Psoas muscle (tissue), 8 donors: ENCODE measurements at regions of chr7 and their contacts with region 1.

Region 1: DNA sequence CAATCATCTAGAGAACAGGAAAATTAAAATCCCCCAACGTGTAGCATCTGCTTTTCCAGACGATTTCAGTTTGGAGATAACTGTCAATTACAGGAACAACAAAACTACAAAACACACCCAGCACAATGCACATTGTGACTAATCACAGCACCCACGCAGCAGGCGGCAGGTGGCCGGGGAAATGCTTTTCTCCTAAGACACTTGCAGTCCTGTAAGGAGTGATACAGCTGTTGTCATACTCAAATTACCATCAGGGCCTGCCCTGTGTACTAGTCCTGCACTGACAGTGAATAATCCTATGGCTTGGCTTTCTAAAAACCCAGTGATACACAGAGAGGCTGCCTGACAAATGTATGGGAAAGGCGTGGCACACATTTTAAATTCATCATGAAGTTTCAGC is 37.8 kb downstream of the COBL start:
- DNase-seq: peak; percentile 46 to 77
- ATAC-seq: peak; percentile 74 to 85 (median 81)
- H3K4me3 ChIP-seq: peak overlapping the region; percentile 53
- H3K27ac ChIP-seq: peak overlapping the region; percentile 92
- H3K4me1 ChIP-seq: peaks cover 41% of the 10 kb centered on the region
- H3K27me3 ChIP-seq: no peaks in the 10 kb centered on the region
- CTCF ChIP-seq: no peak

Region 2: DNA sequence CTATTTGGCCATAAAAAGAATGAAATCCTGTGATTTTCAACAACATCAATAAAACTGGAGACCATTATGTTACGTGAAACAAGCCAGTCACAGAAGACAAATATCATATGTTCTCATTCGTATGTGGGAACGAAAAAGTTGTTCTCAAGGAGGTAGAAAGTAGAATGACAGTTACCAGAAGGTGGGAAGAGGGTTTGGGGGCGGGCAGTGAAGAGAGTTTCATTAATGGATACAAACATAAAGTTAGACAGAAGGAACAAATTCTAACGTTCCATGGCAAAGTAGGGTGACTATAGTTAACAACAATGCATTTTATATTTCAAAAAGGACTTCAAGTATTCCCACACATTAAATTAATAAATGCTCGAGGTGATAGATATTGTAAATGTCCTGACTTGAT is 1283.1 kb before region 1 on chr7:
- intact Hi-C with region 1: no loop called
- DNase-seq: no peak
- ATAC-seq: no peak
- H3K4me3 ChIP-seq: no peak overlapping the region
- H3K27ac ChIP-seq: no peak overlapping the region
- H3K4me1 ChIP-seq: no peaks in the 10 kb centered on the region
- H3K27me3 ChIP-seq: no peaks in the 10 kb centered on the region
- CTCF ChIP-seq: no peak

Region 3: DNA sequence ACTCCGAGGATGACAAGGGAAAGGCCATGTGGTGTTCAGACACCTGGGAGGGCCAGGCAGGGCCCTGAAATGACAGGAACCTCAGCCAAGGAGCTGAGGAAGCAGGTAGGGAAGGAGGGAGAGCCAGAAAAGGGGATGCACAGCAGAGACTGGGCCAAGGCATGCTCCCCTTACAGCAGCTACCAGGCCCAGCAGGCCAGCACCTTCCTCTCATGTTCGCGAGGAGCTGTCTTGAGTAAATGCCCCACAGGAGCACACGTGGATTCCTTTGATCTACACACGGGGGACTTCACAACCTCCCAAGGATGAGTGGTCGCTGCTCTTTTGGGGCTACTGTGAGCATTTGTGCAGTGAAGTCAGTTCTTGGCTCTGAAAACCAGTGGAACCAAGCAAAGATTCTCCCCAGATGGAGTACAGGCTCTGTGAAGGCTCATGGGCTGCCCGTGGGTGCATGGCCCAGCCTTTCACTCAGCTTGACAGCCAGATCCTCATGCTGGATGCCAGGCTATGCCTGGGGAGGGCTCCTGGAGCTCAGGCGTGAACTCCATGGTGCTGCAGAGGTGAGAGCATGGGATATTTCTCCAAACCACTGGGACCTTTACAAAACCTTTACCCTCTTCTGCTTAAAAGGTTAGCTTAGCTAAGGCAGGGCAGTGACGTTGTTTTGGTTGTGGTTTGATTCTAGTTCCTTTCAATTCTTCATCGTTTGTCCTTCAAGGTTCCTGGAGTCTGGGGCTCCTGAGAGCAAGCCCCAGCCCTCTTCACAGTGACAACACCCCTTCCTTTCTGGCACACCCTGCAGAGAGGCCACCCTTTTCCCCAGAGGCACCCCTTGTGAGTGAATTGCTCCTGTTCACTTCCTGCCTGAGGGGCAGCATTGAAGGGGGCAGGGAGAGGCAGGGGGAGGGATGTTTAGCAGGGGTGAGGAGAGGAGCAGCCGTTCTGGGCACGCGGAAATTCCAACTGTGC is 1111.5 kb before region 1 on chr7:
- intact Hi-C with region 1: no loop called
- DNase-seq: no peak
- ATAC-seq: no peak
- H3K4me3 ChIP-seq: no peak overlapping the region
- H3K27ac ChIP-seq: no peak overlapping the region
- H3K4me1 ChIP-seq: no peaks in the 10 kb centered on the region
- H3K27me3 ChIP-seq: no peaks in the 10 kb centered on the region
- CTCF ChIP-seq: no peak

Region 4: GRCh38 chr7:51234139-51234538 is 44.7 kb before region 1 on chr7:
- intact Hi-C with region 1: loop called in 1 of 2 experiments (anchors 5 kb)
- DNase-seq: peak; percentile 86 to 95
- ATAC-seq: peak; percentile 97 to 99 (median 98)
- H3K4me3 ChIP-seq: peak overlapping the region; percentile 40
- H3K27ac ChIP-seq: peak overlapping the region; percentile 85
- H3K4me1 ChIP-seq: peaks cover 18% of the 10 kb centered on the region
- H3K27me3 ChIP-seq: no peaks in the 10 kb centered on the region
- CTCF ChIP-seq: no peak

Region 5: GRCh38 chr7:51255536-51256208 is 23.1 kb before region 1 on chr7:
- intact Hi-C with region 1: no loop called
- DNase-seq: peak in 1 of 2 donors; percentile 82
- ATAC-seq: peak; percentile 86 to 96 (median 95)
- H3K4me3 ChIP-seq: no peak overlapping the region
- H3K27ac ChIP-seq: peak overlapping the region; percentile 77
- H3K4me1 ChIP-seq: peaks cover 39% of the 10 kb centered on the region
- H3K27me3 ChIP-seq: no peaks in the 10 kb centered on the region
- CTCF ChIP-seq: no peak

Region 6: DNA sequence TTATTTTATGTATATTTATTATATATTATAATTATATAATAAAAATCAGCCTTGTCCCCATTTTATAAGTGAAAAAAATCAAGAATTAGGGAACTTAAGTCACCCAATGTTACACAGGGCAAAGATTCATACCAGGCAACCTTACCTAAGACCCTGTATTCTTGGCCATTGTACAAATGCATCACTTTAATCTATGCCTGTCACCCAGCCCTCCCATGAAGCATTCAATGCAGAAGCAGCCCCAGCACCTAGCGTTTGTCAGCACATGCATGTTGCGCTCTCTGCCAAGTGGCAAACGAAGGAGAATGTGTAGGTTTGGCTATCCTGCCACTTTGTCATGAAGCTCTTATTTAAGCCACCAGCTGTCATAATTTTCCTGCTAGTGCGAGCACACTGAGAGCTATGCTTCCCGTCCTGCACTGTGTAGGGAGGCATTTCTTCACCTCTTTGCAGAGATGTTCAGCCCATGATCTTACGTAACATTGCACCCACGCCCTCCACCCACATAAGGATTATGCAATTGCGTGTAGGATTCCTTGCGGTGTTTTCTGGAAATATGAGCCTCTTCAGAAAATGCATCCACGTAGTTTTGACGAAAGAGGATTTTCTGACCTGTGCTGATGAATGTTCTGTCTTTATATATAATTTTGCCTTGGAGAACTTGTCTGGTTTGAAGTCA is 45.5 kb after region 1 on chr7:
- intact Hi-C with region 1: loop called in 1 of 2 experiments (anchors 1 kb)
- DNase-seq: peak in 1 of 2 donors; percentile 26
- ATAC-seq: peak; percentile 86 to 94 (median 92)
- H3K4me3 ChIP-seq: no peak overlapping the region
- H3K27ac ChIP-seq: peak overlapping the region; percentile 72
- H3K4me1 ChIP-seq: peaks cover 18% of the 10 kb centered on the region
- H3K27me3 ChIP-seq: no peaks in the 10 kb centered on the region
- CTCF ChIP-seq: no peak